Caco-2 (cell line): ENCODE measurements at regions of chr16 and their contacts with region 1.

Region 1: DNA sequence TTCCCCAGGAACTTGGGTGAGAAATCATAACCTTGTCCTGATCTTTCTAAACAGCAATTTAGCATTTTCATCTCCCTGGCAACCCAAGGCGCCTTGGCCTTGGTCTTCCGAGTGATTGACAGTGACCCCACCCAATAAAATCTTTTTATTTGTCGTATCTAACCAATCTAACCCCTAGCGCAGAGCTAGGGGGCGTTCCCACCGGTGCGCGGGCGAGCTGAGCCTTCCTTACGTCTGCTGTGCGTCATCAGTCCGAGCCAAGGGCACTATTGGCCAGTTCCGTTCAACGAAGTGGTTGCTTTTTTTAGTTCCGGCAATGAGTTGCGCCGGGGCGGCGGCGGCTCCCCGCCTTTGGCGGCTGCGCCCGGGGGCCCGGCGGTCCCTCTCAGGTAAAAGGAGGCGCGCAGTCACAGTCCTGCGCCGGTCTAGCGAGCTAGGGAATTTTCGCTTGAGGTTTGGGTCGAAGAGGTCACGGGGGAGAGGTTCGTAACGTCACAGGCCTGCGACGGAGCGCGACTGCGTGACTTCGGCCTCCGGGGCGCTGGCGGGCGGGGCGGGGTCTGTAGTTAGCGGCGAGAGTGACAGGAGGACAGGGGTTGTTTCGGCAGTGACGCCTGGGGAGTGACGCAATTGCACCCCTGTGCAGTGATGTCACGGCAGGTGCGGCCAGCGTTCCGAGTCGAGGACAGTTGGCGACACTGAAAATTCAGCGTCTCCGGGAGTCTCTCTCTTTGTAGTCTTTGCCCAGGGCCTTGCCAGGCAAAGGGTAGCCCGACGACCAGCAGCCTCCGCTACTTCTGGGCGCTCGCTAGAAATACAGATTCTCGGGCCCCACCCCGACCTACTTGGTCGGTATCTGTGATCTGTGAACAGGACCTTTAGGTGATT is at the start of gene COQ7:
- DNase-seq: peak; percentile 98
- H3K4me3 ChIP-seq: peak within 1 kb of the TSS; percentile 83
- H3K4me3 Mint-ChIP-seq: peak within 1 kb of the TSS; percentile 83
- H3K27ac Mint-ChIP-seq: peak within 1 kb of the TSS; percentile 98
- H3K4me1 ChIP-seq: no peaks in the 10 kb centered on the region
- H3K4me1 Mint-ChIP-seq: peaks cover 9% of the 10 kb centered on the region
- H3K27me3 ChIP-seq: no peaks in the 10 kb centered on the region
- H3K27me3 Mint-ChIP-seq: no peaks in the 10 kb centered on the region
- CTCF ChIP-seq: no peak
- total RNA-seq, gene COQ7: 15.7 and 17.3 TPM in 2 replicates

Region 2: GRCh38 chr16:18983565-18984424 is 83.8 kb before region 1 on chr16 and contains the start of gene TMC7:
- CTCF ChIA-PET with region 1: interaction called, 12 read pairs
- POLR2A ChIA-PET with region 1: interaction called, 7 read pairs
- intact Hi-C with region 1: loop called (anchors 1 kb)
- DNase-seq: peak; percentile 91 to 95
- H3K4me3 ChIP-seq: peak within 1 kb of the TSS; percentile 56
- H3K4me3 Mint-ChIP-seq: peak within 1 kb of the TSS; percentile 72
- H3K27ac Mint-ChIP-seq: peak within 1 kb of the TSS; percentile 35
- H3K4me1 ChIP-seq: no peaks in the 10 kb centered on the region
- H3K4me1 Mint-ChIP-seq: no peaks in the 10 kb centered on the region
- H3K27me3 ChIP-seq: no peaks in the 10 kb centered on the region
- H3K27me3 Mint-ChIP-seq: no peaks in the 10 kb centered on the region
- CTCF ChIP-seq: peak; percentile 63 to 98
- total RNA-seq, gene TMC7: 4.0 and 4.5 TPM in 2 replicates

Region 3: GRCh38 chr16:19001788-19002187 is 65.8 kb before region 1 on chr16:
- CTCF ChIA-PET with region 1: no interaction called
- POLR2A ChIA-PET with region 1: interaction called, 15 read pairs
- intact Hi-C with region 1: loop called (anchors 5 kb)
- DNase-seq: no peak
- H3K4me3 ChIP-seq: no peak overlapping the region
- H3K4me3 Mint-ChIP-seq: no peak overlapping the region
- H3K27ac Mint-ChIP-seq: no peak overlapping the region
- H3K4me1 ChIP-seq: peaks cover 13% of the 10 kb centered on the region
- H3K4me1 Mint-ChIP-seq: no peaks in the 10 kb centered on the region
- H3K27me3 ChIP-seq: no peaks in the 10 kb centered on the region
- H3K27me3 Mint-ChIP-seq: no peaks in the 10 kb centered on the region
- CTCF ChIP-seq: no peak

Region 4: DNA sequence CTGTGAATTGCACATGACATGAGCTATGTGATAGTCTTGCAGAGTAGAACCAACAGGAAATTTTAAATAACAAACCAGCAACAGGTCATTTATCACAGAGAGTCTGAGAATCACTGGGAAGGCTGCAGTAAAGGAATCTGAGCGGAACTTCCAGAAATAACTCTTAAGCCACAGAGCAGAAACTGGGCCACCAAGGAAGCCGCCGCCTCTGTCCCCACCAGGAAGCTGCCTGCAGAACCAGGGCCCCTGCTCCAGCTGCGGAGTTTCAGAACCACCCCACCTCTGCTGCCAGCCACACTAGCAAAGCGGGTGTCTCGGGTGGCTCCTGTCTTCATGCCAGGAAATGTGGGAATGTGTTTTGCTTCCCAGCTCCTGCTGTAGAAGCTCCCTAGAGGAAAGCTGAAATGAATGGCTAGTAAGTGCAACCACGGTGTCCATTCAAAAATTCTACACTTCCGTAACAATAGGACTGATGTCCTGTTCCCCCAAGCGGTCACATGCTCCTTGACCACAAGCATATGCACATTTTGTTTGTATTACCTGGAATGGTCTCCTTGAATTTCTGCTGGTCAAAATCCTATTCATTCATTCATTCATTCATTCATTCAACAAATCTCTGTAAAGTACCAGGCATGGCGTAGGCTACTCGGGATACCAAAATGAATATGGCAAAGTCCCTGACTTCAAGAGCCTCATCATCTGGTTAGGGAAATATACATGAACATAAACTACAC is 38.5 kb after region 1 on chr16:
- CTCF ChIA-PET with region 1: no interaction called
- POLR2A ChIA-PET with region 1: interaction called, 10 read pairs
- intact Hi-C with region 1: no loop called
- DNase-seq: no peak
- H3K4me3 ChIP-seq: no peak overlapping the region
- H3K4me3 Mint-ChIP-seq: no peak overlapping the region
- H3K27ac Mint-ChIP-seq: no peak overlapping the region
- H3K4me1 ChIP-seq: peaks cover 23% of the 10 kb centered on the region
- H3K4me1 Mint-ChIP-seq: peaks cover 15% of the 10 kb centered on the region
- H3K27me3 ChIP-seq: no peaks in the 10 kb centered on the region
- H3K27me3 Mint-ChIP-seq: no peaks in the 10 kb centered on the region
- CTCF ChIP-seq: no peak

Region 5: GRCh38 chr16:19223235-19224170 is 155.9 kb after region 1 on chr16:
- CTCF ChIA-PET with region 1: no interaction called
- POLR2A ChIA-PET with region 1: no interaction called
- intact Hi-C with region 1: no loop called
- DNase-seq: peak in 1 of 2 experiments; percentile 35
- H3K4me3 ChIP-seq: no peak overlapping the region
- H3K4me3 Mint-ChIP-seq: no peak overlapping the region
- H3K27ac Mint-ChIP-seq: no peak overlapping the region
- H3K4me1 ChIP-seq: 0 out of 2 replicates have a peak, but pooled peaks cover 3% of the 10 kb centered on the region
- H3K4me1 Mint-ChIP-seq: peaks cover 20% of the 10 kb centered on the region
- H3K27me3 ChIP-seq: no peaks in the 10 kb centered on the region
- H3K27me3 Mint-ChIP-seq: no peaks in the 10 kb centered on the region
- CTCF ChIP-seq: peak; percentile 45 to 54